Activated CD4-positive, alpha-beta T cell treated with anti-CD3 and anti-CD28 coated beads, Interleukin-2, amount 10 ng/mL, durations not matched to agents 24 days and 14 days (primary cell): ENCODE measurements at regions of chr5 and their contacts with region 1.

Region 1: GRCh38 chr5:40578501-40579451 is 100.9 kb upstream of the PTGER4 start:
- DNase-seq: peak; percentile 76
- H3K4me3 Mint-ChIP-seq: peak overlapping the region; percentile 45
- H3K27ac Mint-ChIP-seq: peak overlapping the region; percentile 93
- H3K4me1 Mint-ChIP-seq: peaks cover 27% of the 10 kb centered on the region
- H3K27me3 Mint-ChIP-seq: no peaks in the 10 kb centered on the region

Region 2: GRCh38 chr5:40333459-40334244 is 245.1 kb before region 1 on chr5:
- intact Hi-C with region 1: loop called (anchors 1 kb)
- DNase-seq: peak; percentile 59
- H3K4me3 Mint-ChIP-seq: no peak overlapping the region
- H3K27ac Mint-ChIP-seq: no peak overlapping the region
- H3K4me1 Mint-ChIP-seq: peaks cover 19% of the 10 kb centered on the region
- H3K27me3 Mint-ChIP-seq: no peaks in the 10 kb centered on the region

Region 3: DNA sequence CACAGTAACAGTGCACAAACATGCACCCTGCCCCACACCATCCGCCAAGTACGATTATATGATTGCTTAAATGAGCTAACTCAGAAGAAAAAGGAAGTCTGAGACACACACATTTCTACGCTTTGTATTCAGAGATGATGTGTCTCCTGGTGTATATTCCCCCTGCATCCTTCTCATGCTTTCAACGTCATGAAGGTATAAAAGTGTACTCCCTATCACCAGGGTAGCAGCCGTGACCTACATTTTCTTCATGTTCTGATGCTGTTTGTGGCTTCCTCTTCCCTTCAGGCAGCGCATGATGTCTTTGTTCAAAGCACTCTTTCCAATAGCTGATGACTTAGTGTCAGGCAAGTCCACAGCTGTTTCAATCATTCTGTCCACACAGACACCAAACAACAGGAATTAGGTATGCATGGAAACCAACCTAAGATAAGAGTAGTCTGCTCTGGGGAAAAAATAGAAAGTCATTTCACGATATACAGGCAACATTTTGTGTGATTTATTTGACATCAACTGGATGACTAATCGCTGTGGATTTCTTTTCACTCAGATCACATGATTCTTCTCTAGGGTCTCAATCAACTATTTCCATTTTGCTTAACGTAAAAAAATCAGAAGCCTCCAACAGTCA is 168.4 kb before region 1 on chr5:
- intact Hi-C with region 1: loop called (anchors 1 kb)
- DNase-seq: peak; percentile 93
- H3K4me3 Mint-ChIP-seq: peak overlapping the region; percentile 79
- H3K27ac Mint-ChIP-seq: peak overlapping the region; percentile 93
- H3K4me1 Mint-ChIP-seq: peaks cover 51% of the 10 kb centered on the region
- H3K27me3 Mint-ChIP-seq: no peaks in the 10 kb centered on the region

Region 4: GRCh38 chr5:40464511-40464910 is 114.3 kb before region 1 on chr5:
- intact Hi-C with region 1: no loop called
- DNase-seq: no peak
- H3K4me3 Mint-ChIP-seq: no peak overlapping the region
- H3K27ac Mint-ChIP-seq: no peak overlapping the region
- H3K4me1 Mint-ChIP-seq: peaks cover 7% of the 10 kb centered on the region
- H3K27me3 Mint-ChIP-seq: no peaks in the 10 kb centered on the region

Region 5: GRCh38 chr5:40486437-40487275 is 92.1 kb before region 1 on chr5:
- intact Hi-C with region 1: loop called (anchors 1 kb)
- DNase-seq: peak; percentile 89
- H3K4me3 Mint-ChIP-seq: peak overlapping the region; percentile 45
- H3K27ac Mint-ChIP-seq: peak overlapping the region; percentile 89
- H3K4me1 Mint-ChIP-seq: peaks cover 55% of the 10 kb centered on the region
- H3K27me3 Mint-ChIP-seq: no peaks in the 10 kb centered on the region

Region 6: DNA sequence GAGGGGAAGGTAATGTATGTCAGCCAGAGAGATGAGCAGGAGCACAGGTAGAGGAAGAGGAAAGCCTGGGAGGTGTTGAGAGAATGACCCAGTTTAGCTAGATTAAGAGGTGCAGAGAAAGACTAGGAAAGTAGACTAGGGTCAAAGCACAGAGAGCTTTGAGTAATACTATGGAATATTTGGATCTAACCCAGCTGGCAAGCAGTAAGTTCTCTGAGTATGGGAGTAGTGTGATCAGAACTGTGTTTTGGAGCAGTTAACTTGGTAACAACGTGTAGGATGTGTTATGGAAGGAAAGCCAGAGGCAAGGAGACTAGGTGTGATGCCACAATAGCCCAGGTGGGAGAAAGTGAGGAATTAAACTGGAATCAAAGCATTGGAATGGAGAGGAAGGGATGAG is 16.0 kb after region 1 on chr5:
- intact Hi-C with region 1: loop called (anchors 1 kb)
- DNase-seq: no peak
- H3K4me3 Mint-ChIP-seq: no peak overlapping the region
- H3K27ac Mint-ChIP-seq: no peak overlapping the region
- H3K4me1 Mint-ChIP-seq: peaks cover 27% of the 10 kb centered on the region
- H3K27me3 Mint-ChIP-seq: no peaks in the 10 kb centered on the region

Region 7: DNA sequence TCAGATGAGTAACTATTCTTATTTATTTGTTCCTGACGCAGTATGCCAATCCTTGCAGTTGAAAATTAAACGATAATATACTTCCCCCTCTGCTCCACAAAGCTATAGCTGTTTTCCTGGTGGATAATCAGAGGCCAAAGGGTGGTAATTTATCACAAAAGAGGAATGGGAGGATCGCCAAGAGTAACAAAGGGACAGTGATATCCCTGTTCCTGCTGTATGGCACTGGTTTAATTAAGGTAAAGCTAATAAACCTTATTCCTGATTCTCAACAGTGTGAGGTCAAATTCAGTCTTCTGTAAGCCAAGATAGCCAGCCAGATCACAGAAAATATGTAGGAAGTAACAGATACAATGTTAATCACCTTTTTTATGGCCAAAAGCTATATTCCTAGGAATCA is 67.5 kb after region 1 on chr5:
- intact Hi-C with region 1: loop called (anchors 1 kb)
- DNase-seq: no peak
- H3K4me3 Mint-ChIP-seq: no peak overlapping the region
- H3K27ac Mint-ChIP-seq: no peak overlapping the region
- H3K4me1 Mint-ChIP-seq: peaks cover 30% of the 10 kb centered on the region
- H3K27me3 Mint-ChIP-seq: no peaks in the 10 kb centered on the region

Region 8: DNA sequence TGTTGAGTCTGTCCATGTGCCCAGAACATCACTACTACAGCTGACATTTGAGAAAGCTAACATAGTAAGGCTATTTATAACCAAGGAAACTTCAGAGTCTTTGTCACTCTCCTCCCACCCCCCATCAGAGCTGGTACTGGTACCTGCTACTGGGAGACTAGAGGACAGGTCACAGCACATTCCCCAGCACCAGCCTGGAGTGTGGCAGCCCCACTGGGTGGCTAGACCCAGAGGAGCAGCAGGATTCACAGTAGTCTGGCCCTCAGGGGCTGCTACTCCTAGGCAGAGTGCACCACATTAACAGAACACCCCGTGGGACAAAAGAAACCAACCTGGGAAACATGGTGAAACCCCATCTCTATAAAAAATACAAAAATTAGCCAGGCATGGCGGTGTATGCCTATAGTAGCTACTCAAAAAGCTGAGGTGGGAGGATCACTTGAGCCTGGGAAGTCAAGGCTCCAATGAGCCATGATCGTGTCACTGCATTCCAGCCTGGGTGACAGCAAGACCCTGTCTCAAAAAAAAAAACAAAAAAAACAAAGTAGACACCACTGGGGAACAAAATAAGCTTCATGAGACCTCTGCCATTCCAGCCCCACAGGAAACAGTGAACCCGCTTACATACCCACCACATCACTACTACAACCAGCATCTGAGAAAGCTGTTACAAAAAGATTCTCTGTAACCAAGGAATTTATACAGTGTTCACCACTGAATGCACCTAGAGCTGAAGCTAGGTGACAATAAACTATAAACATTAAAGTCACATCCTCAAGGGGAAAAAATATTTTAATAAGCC is 74.6 kb after region 1 on chr5:
- intact Hi-C with region 1: loop called (anchors 2 kb)
- DNase-seq: peak; percentile 72
- H3K4me3 Mint-ChIP-seq: peak overlapping the region; percentile 88
- H3K27ac Mint-ChIP-seq: peak overlapping the region; percentile 95
- H3K4me1 Mint-ChIP-seq: peaks cover 75% of the 10 kb centered on the region
- H3K27me3 Mint-ChIP-seq: no peaks in the 10 kb centered on the region